ENCODE measurements at regions of chr16 and their contacts with region 1.

Region 1: DNA sequence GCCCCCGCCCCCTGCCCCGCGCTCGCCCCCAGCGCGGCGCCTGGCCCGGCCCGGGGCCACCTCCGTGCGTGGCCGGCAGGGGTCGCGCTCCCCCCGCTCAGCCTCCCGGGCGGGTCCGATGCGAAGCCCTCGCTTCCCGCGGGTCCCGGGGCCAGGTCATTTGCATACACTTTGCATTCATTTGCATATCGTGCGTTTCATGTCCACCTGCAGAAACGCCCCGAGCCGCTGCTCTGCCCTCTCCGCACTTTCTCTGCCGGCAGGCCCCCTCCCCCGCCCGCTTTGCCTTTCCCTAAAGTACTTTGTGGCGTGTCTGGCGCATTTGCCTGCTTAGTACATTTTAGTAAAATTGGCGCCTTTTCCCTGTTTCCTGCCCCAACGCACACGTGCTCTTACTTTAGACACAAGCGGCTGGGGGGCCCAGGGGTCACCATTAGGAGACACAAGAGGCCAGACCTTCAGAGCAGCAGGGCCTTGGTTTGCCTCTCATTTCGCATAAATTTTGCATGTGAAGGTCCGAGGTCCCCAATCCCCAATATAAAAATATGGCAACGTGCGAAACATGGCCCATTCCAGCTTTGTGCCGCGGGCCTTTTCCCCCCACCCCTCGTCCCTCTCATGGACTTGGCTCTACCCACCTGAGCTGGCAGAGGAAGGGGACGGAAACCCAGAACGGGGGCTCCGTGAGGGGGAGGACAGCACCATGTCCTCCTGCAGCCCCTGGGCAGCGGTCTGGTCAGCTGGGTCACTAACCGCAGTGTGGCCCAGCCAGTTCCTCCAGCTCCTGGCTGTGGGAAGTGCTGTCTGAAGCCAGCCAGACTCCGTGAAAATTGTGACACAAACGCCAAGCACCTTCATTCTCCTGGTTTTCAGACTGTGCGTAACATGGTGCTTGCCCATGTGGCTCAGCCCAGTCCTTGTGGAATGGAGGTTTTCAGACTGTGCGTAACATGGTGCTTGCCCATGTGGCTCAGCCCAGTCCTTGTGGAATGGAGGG is 34.8 kb downstream of the CBFA2T3 start:
- DNase-seq: peak; percentile 48 to 68
- ATAC-seq: peak in 3 of 8 donors; percentile 35 to 54 (median 40)
- H3K4me3 ChIP-seq: peak overlapping the region in 9 of 10 donors; percentile 35 to 83 (median 46)
- H3K27ac ChIP-seq: peak overlapping the region in 5 of 10 donors; percentile 22 to 94 (median 53)
- H3K4me1 ChIP-seq: peaks cover 19 to 44% (median 31%) of the 10 kb centered on the region in 9 donors
- H3K27me3 ChIP-seq: peaks cover 0 to 43% (median 10%) of the 10 kb centered on the region in 7 donors
- CTCF ChIP-seq: peak; percentile 60 to 94 (median 71)

Region 2: DNA sequence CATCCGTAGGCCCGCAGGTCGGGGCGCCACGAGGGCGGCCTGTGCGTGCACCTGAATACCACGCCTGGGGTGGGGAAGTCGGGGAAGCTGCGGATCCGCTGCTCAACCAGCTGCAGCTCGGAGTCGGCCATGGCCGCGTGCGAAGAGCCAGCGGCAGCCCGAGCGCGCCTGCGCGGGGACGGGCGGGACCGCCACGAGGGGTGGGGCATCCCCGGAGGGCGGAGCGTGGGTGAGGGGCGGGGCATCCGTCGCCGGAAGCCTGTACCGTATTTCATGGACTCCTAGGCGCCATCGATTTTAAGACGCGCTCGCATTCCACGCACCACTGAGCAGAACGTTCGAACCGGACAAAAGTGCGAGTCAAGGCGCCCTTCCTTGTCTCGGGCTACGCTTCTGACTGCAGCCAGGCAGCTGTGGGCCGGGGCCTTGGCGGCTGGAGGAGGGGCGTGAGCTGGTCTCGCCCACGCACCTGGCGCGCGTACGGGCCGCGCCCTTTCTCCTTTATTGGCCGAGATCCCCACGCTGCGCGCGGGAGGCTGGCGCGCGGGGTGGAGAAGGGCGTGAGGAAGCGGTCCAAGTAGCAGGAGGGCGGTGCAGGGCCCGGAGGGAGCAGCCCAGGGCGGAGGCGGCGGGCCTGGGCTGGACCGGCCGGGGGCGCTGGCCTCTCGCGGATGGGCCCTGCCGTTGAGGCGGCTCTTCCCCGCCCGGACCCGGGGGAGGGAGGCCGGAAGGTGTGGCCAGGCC is 130.3 kb before region 1 on chr16 and contains the start of gene APRT:
- intact Hi-C with region 1: loop called in 3 of 10 experiments (anchors 1 to 5 kb)
- DNase-seq: peak; percentile 94 to 97
- ATAC-seq: peak; percentile 90 to 96 (median 94)
- H3K4me3 ChIP-seq: peak within 1 kb of the TSS; percentile 43 to 94 (median 80)
- H3K27ac ChIP-seq: peak within 1 kb of the TSS; percentile 87 to 97 (median 94)
- H3K4me1 ChIP-seq: peaks cover 12 to 40% (median 30%) of the 10 kb centered on the region in 9 donors
- H3K27me3 ChIP-seq: no peaks in the 10 kb centered on the region
- CTCF ChIP-seq: peak in 6 of 9 donors; percentile 29 to 63 (median 54)
- total RNA-seq, gene APRT: 20.8 to 58.0 (median 35.4) TPM

Region 3: DNA sequence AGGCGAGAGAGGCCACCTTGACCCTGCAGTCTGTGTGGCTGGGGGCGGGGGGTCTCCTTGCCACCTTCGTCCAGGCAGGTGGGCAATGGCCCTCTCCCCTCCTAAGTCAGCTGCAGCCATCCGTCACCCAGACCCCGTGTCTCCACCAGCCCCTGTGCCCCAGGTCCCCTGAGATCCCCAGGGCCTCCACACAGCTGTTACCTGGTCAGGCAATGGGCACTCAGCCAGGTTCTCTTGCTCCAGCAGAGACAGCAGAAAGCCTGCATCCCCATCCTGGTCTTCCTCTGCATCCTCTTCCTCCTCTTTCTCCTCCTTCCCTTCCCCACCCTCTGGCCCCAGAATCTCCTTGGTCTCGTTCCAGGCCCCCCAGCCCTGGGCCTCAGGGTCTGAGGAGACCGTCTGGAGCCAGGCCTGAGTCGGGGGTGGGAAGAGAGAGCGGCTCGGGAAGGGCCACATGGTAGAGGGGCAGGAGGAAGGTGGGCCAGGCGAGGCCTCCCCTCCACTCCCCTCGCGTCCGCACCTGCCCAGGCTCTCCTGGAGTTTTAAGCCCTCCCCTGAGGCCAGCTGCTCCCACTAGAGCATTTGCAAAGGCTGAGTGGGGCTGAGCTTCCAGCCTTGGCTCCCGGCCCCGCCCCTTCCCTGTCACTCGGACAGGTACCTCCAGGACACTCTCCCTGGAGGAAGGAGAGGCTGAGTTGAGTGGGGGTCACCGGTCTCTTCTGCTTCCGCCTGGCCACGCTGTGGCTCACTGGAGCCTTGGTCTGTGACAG is 75.9 kb before region 1 on chr16 and contains the start of gene PABPN1L:
- intact Hi-C with region 1: no loop called
- DNase-seq: no peak
- ATAC-seq: no peak
- H3K4me3 ChIP-seq: no peak within 1 kb of the TSS
- H3K27ac ChIP-seq: no peak within 1 kb of the TSS
- H3K4me1 ChIP-seq: peaks cover 0 to 17% (median 7%) of the 10 kb centered on the region in 9 donors
- H3K27me3 ChIP-seq: peaks cover 0 to 22% (median 5%) of the 10 kb centered on the region in 7 donors
- CTCF ChIP-seq: no peak
- total RNA-seq, gene PABPN1L: 0.21 TPM in 1 of 10 donors, not detected in the others

Region 4: DNA sequence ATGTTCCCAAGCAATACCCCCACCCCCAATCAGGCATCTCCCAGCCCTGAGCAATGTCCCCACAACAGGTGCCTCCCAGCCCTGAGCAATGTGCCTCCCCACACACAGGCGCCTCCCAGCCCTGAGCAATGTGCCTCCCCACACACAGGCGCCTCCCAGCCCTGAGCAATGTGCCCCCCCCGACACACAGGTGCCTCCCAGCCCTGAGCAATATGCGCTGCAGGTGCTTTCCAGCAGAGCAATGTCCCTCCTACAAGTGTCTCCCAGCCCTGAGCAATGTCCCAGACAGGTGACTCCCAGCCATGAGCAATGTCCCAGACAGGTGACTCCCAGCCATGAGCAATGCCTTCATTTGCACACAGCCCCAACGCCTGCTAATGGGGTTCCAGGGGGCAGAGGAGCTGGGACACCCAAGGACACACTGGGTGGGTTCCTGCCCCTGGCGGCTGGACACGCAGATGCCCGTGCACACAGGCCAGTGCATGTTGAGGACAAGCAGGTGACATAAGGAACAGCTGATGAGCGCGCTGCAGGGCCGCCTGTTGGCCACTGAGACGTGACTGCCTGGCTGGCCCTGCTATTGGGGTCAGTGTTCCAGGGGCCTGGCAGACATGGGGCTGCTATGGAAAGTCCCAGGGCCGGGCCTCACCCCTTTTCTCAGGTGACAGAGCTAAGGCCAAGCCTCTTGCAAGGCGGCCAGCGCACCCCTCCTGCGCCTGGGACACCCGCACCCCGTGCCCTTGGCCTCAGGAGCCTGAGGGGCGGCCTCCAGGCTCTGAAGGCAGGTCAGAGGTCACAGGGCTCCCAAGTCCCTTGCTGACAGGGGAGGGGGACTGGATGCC is 48.9 kb before region 1 on chr16:
- intact Hi-C with region 1: loop called in 4 of 10 experiments (anchors 2 to 5 kb)
- DNase-seq: no peak
- ATAC-seq: no peak
- H3K4me3 ChIP-seq: no peak overlapping the region
- H3K27ac ChIP-seq: no peak overlapping the region
- H3K4me1 ChIP-seq: peaks cover 0 to 10% (median 5%) of the 10 kb centered on the region in 9 donors
- H3K27me3 ChIP-seq: no peaks in the 10 kb centered on the region
- CTCF ChIP-seq: no peak

Region 5: GRCh38 chr16:89093602-89094251 is 151.5 kb after region 1 on chr16 and contains the start of gene ACSF3:
- intact Hi-C with region 1: loop called in 4 of 10 experiments (anchors 5 to 10 kb)
- DNase-seq: peak; percentile 51 to 76
- ATAC-seq: peak; percentile 84 to 94 (median 89)
- H3K4me3 ChIP-seq: peak within 1 kb of the TSS; percentile 65 to 97 (median 88)
- H3K27ac ChIP-seq: peak within 1 kb of the TSS in 9 of 10 donors; percentile 70 to 87 (median 80)
- H3K4me1 ChIP-seq: peaks cover 0 to 52% (median 24%) of the 10 kb centered on the region in 9 donors
- H3K27me3 ChIP-seq: peaks cover 0 to 36% (median 29%) of the 10 kb centered on the region in 7 donors
- CTCF ChIP-seq: no peak
- total RNA-seq, gene ACSF3: 11.0 to 22.5 (median 17.8) TPM

Region 6: DNA sequence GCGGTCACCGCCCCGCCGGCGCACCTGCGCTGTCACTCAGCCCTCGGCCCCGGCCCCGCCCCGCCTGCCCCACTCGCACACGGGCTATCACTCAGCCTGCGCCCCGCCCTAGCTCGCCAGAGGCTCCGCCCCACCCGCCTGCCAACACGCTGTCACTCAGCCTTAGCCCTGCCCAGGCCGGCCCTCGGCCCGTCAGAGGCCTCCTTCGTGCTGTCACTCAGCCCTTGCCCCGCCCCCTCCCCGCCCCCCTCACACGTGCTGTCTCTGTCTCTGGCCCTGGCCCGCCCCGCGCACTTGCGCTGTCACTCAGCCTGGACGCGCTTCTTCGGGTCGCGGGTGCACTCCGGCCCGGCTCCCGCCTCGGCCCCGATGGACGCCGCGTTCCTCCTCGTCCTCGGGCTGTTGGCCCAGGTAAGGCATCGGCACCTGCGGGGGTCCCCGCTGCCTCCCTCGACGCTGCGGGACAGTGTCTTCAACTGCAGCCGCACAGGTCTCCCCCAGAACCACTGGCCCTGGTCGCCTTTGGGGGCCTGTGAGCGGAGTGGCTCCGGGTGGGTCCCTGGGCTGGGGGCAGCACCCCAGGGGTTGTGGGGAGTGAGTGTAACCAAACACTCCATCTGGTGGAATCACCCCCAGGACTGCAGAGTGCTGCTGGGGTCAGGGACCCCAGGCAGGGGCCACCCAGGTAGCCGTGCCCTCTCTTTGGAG is 229.4 kb after region 1 on chr16 and contains the start of gene CDH15:
- intact Hi-C with region 1: loop called in 7 of 10 experiments (anchors 2 to 10 kb)
- DNase-seq: peak; percentile 83 to 90
- ATAC-seq: peak; percentile 88 to 92 (median 92)
- H3K4me3 ChIP-seq: peak within 1 kb of the TSS in 9 of 10 donors; percentile 0 to 45 (median 31)
- H3K27ac ChIP-seq: no peak within 1 kb of the TSS
- H3K4me1 ChIP-seq: peaks cover 0 to 25% (median 17%) of the 10 kb centered on the region in 9 donors
- H3K27me3 ChIP-seq: peaks cover 14 to 73% (median 62%) of the 10 kb centered on the region in 7 donors
- CTCF ChIP-seq: no peak
- total RNA-seq, gene CDH15: 0.08 to 0.16 TPM in 2 of 10 donors, not detected in the others